ENCODE measurements at regions of chr1 and their contacts with region 1.

Region 1: GRCh38 chr1:180805316-180805715 is 107.4 kb upstream of the KIAA1614 start:
- DNase-seq: no peak
- H3K4me3 ChIP-seq: no peak overlapping the region
- CTCF ChIP-seq: no peak

Region 2: GRCh38 chr1:180734366-180734765 is 71.0 kb before region 1 on chr1:
- in situ Hi-C with region 1: loop called (anchors 5 kb)
- DNase-seq: no peak
- H3K4me3 ChIP-seq: no peak overlapping the region
- CTCF ChIP-seq: no peak

Measured in astrocyte of the cerebellum (primary cell).